Activated CD4-positive, alpha-beta T cell treated with anti-CD3 and anti-CD28 coated beads, Interleukin-2, amount 10 ng/mL, durations not matched to agents 24 days and 14 days (primary cell): ENCODE measurements at regions of chr2 and their contacts with region 1.

Region 1: GRCh38 chr2:9630749-9631483 is at the start of gene YWHAQ:
- DNase-seq: peak; percentile 99
- H3K4me3 Mint-ChIP-seq: peak within 1 kb of the TSS; percentile 96
- H3K27ac Mint-ChIP-seq: peak within 1 kb of the TSS; percentile 96
- H3K4me1 Mint-ChIP-seq: peaks cover 42% of the 10 kb centered on the region
- H3K27me3 Mint-ChIP-seq: peaks cover 13% of the 10 kb centered on the region
- total RNA-seq, gene YWHAQ: 321 and 335 TPM in 2 replicates

Region 2: DNA sequence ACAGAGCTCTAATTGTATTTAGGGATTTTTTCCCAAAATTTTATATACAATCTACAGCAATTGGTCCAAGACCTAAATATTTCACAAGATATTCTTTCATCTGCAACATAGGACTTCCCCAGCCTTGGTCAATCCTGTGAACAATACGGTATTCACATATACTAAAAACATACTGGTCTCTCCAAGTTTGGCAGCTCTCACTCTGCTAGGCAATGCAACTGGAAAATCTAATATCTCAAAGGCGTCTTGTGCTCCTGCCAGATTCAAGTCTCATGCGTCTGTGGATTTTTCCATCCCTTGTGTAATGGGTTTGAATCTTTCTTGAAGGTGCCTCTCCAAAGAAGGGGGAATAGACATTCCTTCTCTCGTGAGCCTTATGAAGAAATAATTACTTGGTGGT is 600.1 kb before region 1 on chr2:
- intact Hi-C with region 1: no loop called
- DNase-seq: no peak
- H3K4me3 Mint-ChIP-seq: no peak overlapping the region
- H3K27ac Mint-ChIP-seq: no peak overlapping the region
- H3K4me1 Mint-ChIP-seq: peaks cover 15% of the 10 kb centered on the region
- H3K27me3 Mint-ChIP-seq: peaks cover 25% of the 10 kb centered on the region

Region 3: GRCh38 chr2:9423100-9423921 is 207.6 kb before region 1 on chr2 and contains the starts of genes CPSF3 and ITGB1BP1:
- intact Hi-C with region 1: loop called (anchors 1 kb)
- DNase-seq: peak; percentile 99
- H3K4me3 Mint-ChIP-seq: no peak within 1 kb of the TSS
- H3K27ac Mint-ChIP-seq: peak within 1 kb of the TSS; percentile 94
- H3K4me1 Mint-ChIP-seq: peaks cover 34% of the 10 kb centered on the region
- H3K27me3 Mint-ChIP-seq: no peaks in the 10 kb centered on the region
- total RNA-seq, gene CPSF3: 81.4 TPM in 2 replicates
- total RNA-seq, gene ITGB1BP1: 121 and 131 TPM in 2 replicates

Region 4: DNA sequence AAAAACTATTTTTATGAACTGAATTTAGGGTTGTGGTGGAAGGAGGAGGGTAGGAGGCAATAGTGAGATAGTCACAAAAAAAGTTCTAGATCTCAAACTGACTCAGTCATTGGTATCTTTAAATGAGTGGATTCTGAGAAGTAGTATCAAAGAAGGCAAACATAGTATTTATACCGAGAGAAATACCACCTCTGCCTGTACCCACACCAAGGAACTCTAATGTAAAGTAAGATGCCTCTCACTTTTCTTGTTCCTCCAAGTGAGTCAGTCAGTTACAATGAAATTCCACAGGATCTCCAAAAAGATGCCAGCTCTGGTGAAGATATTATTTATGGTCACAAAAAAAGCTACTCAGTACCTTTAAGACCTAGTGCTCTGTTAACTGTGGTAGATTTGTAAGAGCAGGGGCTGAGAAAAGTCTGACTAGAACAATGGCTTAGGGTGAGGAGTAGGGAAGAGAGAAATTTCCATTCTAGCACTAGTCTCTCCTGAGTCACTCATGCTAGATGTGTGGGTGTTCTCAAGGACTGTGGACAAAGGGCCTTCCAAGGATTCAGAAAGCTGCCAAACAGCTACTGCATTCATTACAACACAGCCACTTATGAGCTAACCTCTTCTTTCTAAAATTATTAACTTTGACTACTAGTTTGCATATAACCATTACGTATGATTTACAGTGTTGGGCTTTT is 36.4 kb before region 1 on chr2:
- intact Hi-C with region 1: loop called (anchors 1 kb)
- DNase-seq: no peak
- H3K4me3 Mint-ChIP-seq: peak overlapping the region; percentile 22
- H3K27ac Mint-ChIP-seq: peak overlapping the region; percentile 81
- H3K4me1 Mint-ChIP-seq: peaks cover 52% of the 10 kb centered on the region
- H3K27me3 Mint-ChIP-seq: no peaks in the 10 kb centered on the region

Region 5: GRCh38 chr2:9656270-9656766 is 25.4 kb after region 1 on chr2:
- intact Hi-C with region 1: loop called (anchors 1 kb)
- DNase-seq: peak; percentile 88
- H3K4me3 Mint-ChIP-seq: peak overlapping the region; percentile 25
- H3K27ac Mint-ChIP-seq: peak overlapping the region; percentile 93
- H3K4me1 Mint-ChIP-seq: peaks cover 46% of the 10 kb centered on the region
- H3K27me3 Mint-ChIP-seq: peaks cover 16% of the 10 kb centered on the region

Region 6: GRCh38 chr2:9708683-9709538 is 78.0 kb after region 1 on chr2:
- intact Hi-C with region 1: loop called (anchors 1 kb)
- DNase-seq: no peak
- H3K4me3 Mint-ChIP-seq: peak overlapping the region; percentile 17
- H3K27ac Mint-ChIP-seq: peak overlapping the region; percentile 91
- H3K4me1 Mint-ChIP-seq: peaks cover 51% of the 10 kb centered on the region
- H3K27me3 Mint-ChIP-seq: no peaks in the 10 kb centered on the region

Region 7: DNA sequence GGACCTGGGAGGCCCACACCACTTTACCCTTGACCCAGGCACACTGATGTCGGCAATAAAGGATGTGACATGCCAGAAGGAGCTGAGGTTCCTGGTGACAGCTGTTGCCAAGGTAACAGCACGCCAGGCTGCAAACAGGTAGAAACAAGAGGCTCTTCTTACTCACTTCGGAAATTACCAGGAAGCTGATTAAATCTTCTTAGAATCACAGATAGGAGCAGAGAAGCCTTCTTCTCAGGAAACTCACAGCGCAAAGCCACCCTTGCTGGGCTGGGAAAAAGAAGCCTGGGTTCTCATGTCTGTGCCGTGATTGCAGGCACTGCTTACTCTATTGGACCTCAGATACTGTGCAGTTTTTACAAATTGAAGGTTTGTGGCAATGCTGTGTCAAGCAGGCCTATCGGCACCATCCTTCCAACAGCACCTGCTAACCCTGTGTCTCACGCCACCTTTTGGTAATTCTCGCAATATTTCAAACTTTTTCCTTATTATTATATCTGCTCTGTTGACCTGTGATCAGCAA is 151.3 kb after region 1 on chr2:
- intact Hi-C with region 1: loop called (anchors 1 kb)
- DNase-seq: peak; percentile 94
- H3K4me3 Mint-ChIP-seq: peak overlapping the region; percentile 46
- H3K27ac Mint-ChIP-seq: peak overlapping the region; percentile 98
- H3K4me1 Mint-ChIP-seq: peaks cover 52% of the 10 kb centered on the region
- H3K27me3 Mint-ChIP-seq: no peaks in the 10 kb centered on the region

Region 8: DNA sequence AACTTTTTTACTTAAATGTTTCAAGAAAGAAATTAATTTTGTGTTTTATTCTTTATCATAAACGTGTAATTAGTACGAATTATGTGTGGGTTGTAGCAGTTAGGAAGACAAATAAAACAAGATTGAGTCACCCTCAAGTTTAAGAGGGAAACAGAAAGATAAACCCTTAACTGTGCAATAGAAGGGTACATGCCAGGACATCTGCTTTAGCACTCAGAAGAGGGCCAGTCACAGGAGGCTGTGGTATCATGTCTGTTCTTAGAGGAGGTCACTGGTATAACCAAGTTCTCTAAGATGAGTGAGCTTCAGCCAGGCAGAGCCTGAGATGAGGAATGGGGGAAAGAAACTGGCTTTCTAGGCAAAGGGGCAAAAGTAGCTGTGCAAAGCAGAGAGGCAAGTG is 278.2 kb after region 1 on chr2:
- intact Hi-C with region 1: no loop called
- DNase-seq: no peak
- H3K4me3 Mint-ChIP-seq: no peak overlapping the region
- H3K27ac Mint-ChIP-seq: no peak overlapping the region
- H3K4me1 Mint-ChIP-seq: peaks cover 7% of the 10 kb centered on the region
- H3K27me3 Mint-ChIP-seq: no peaks in the 10 kb centered on the region